T-cell (primary cell): ENCODE measurements at regions of chr10 and their contacts with region 1.

Region 1: GRCh38 chr10:63083904-63084689 is 49.0 kb upstream of the NRBF2 start:
- DNase-seq: peak in 28 of 35 experiments; percentile 1 to 73 (median 12)
- ATAC-seq: peak; percentile 55 to 66 (median 64)
- H3K4me3 ChIP-seq: no peak overlapping the region
- H3K4me3 Mint-ChIP-seq: no peak overlapping the region
- H3K27ac ChIP-seq: no peak overlapping the region
- H3K27ac Mint-ChIP-seq: no peak overlapping the region
- H3K4me1 ChIP-seq: no peaks in the 10 kb centered on the region
- H3K4me1 Mint-ChIP-seq: no peaks in the 10 kb centered on the region
- H3K27me3 ChIP-seq: peaks cover 0 to 6% of the 10 kb centered on the region in 2 experiments
- H3K27me3 Mint-ChIP-seq: peaks cover 3 to 14% of the 10 kb centered on the region in 2 donors

Region 2: GRCh38 chr10:62610649-62611229 is 473.4 kb before region 1 on chr10:
- CTCF ChIA-PET with region 1: interaction called, 7 to 11 read pairs
- POLR2A ChIA-PET with region 1: no interaction called
- DNase-seq: peak; percentile 39 to 83 (median 64)
- ATAC-seq: peak; percentile 84 to 94 (median 86)
- H3K4me3 ChIP-seq: no peak overlapping the region
- H3K4me3 Mint-ChIP-seq: no peak overlapping the region
- H3K27ac ChIP-seq: no peak overlapping the region
- H3K27ac Mint-ChIP-seq: no peak overlapping the region
- H3K4me1 ChIP-seq: peaks cover 0 to 6% of the 10 kb centered on the region in 2 experiments
- H3K4me1 Mint-ChIP-seq: peaks cover 0 to 6% (median 4%) of the 10 kb centered on the region in 3 donors
- H3K27me3 ChIP-seq: no peaks in the 10 kb centered on the region
- H3K27me3 Mint-ChIP-seq: peaks cover 8 to 10% of the 10 kb centered on the region in 2 donors